Pancreas (tissue), 10 donors: ENCODE measurements at regions of chr15 and their contacts with region 1.

Region 1: DNA sequence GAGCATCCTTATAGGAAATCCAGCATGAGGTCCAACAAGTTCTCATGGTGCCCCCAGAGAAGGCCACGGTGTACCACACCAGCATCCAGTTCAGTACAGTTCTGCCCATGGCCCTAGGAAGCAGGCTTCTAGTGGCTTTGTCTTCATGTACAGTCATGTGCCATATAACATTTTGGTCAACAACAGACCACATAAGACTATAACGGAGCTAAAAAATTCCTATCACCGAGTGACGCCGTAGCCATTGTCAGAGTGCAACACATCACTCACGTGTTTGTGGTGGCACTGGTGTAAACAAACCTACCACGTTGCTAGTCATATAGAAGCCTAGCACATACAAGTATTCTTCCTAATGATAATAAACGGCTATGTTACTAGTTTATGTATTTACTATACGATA is 209.0 kb downstream of the ARRDC4 start:
- DNase-seq: no peak
- ATAC-seq: no peak
- H3K4me3 ChIP-seq: no peak overlapping the region
- H3K27ac ChIP-seq: no peak overlapping the region
- H3K4me1 ChIP-seq: no peaks in the 10 kb centered on the region
- H3K27me3 ChIP-seq: no peaks in the 10 kb centered on the region
- CTCF ChIP-seq: no peak

Region 2: DNA sequence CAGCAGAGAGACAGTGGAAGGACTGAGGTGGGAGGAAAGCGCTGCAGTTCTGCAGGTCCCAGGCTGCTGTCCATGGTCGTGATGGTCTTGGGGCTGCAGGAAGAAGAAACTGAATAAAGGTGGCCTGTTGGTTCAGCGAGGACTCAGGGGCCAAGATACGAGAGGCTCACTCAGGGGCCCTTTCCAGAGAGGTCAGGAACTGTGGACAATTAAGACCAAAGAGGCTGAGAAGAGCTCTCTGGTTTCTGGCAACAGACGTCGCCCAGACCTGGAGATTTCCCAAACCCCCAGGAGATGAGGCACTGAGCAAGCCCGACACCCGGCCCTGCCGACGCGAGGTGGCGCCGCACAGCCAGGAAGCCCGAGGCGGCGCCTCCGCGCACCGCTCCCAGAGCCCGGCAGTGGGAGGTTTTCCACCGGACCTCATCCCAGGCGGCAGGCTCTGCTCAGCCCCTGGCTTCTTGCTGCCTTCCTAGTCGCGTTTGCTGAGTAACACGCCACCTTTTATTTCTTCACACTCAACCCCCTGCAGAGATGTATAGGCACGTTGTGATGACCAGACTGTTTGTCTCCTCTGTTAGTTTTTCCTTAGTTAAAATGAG is 265.5 kb before region 1 on chr15:
- intact Hi-C with region 1: loop called in 1 of 3 experiments (anchors 5 kb)
- DNase-seq: peak; percentile 53 to 90 (median 76)
- ATAC-seq: peak; percentile 95 to 100 (median 98)
- H3K4me3 ChIP-seq: no peak overlapping the region
- H3K27ac ChIP-seq: no peak overlapping the region
- H3K4me1 ChIP-seq: no peaks in the 10 kb centered on the region
- H3K27me3 ChIP-seq: peaks cover 0 to 9% (median 0%) of the 10 kb centered on the region in 4 donors
- CTCF ChIP-seq: peak in 3 of 4 donors; percentile 40 to 61 (median 60)

Region 3: DNA sequence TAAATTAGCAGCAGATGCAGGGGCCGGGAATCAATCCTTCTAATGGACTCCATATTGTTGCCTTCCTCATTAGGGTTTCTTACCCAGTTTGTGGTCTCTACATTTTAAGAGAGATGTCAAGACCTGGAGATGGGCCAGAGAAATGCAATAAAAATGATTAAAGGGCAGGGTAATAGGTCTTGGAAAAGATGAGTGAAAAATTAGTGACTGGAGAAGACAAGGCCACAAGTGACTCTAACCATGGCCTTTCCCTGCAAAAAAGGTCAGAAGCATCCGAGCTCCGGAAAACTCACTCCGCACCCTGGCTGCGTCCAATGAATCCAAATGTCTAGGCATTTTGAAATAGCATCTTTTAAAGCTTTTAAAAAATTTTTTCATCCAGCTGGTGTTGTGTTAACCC is 56.2 kb before region 1 on chr15:
- intact Hi-C with region 1: no loop called
- DNase-seq: no peak
- ATAC-seq: no peak
- H3K4me3 ChIP-seq: no peak overlapping the region
- H3K27ac ChIP-seq: no peak overlapping the region
- H3K4me1 ChIP-seq: no peaks in the 10 kb centered on the region
- H3K27me3 ChIP-seq: no peaks in the 10 kb centered on the region
- CTCF ChIP-seq: no peak